Panc1 (cell line): ENCODE measurements at regions of chr9 and their contacts with region 1.

Region 1: GRCh38 chr9:19174127-19174912 is 47.0 kb upstream of the PLIN2 start:
- DNase-seq: no peak
- ATAC-seq: peak; percentile 71; the same call in 1 of the 2 replicates
- H3K4me3 ChIP-seq: no peak overlapping the region
- H3K27ac ChIP-seq: no peak overlapping the region
- H3K4me1 ChIP-seq: no peaks in the 10 kb centered on the region
- H3K27me3 ChIP-seq: no peaks in the 10 kb centered on the region
- CTCF ChIP-seq: peak; percentile 38

Region 2: DNA sequence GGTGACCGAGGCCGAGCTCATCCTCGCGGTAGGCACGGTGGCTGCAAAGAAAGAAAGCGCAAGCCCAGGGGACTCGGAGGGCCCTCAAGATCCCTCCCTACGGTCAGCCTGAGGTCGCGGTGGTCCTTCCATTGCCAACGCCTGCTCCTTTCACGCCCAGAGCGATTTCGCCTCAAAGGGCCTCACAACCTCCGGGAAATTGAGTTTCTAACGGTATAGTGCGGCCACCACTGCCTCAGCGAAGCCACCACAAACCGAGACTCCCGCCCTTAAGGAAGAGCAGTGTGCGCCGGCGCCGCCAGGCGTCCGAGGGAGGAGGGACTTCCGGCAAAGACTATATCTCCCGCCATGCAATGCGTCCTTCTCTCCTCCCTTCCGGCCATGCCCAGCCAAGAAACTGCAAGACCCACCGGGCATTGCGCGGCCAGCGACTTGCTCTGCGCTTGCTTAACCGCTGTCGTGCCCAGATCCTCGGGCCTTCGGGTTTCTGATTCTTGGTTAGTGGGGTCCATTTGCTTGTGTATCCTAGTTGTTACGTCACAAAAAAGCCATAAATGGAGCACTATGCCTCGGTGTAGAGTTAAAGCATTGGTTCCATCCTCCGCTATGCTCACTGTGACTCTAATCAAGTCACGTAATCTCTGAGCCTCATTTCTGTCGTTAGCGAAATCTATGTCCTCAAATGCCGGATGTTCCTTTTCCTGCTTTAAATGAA is 71.5 kb before region 1 on chr9 and contains the start of gene HAUS6:
- CTCF ChIA-PET with region 1: no interaction called
- POLR2A ChIA-PET with region 1: no interaction called
- in situ Hi-C with region 1: no loop called
- intact Hi-C with region 1: loop called (anchors 10 kb)
- DNase-seq: peak; percentile 66
- ATAC-seq: peak; percentile 99
- H3K4me3 ChIP-seq: peak within 1 kb of the TSS; percentile 65 to 79
- H3K27ac ChIP-seq: peak within 1 kb of the TSS; percentile 66
- H3K4me1 ChIP-seq: no peaks in the 10 kb centered on the region
- H3K27me3 ChIP-seq: no peaks in the 10 kb centered on the region
- CTCF ChIP-seq: no peak
- total RNA-seq, gene HAUS6: 9.3 TPM